ENCODE measurements at regions of chr4 and their contacts with region 1.

Region 1: GRCh38 chr4:45751877-45752530 is 371.9 kb downstream of the GABRG1 start:
- DNase-seq: no peak
- ATAC-seq: no peak
- H3K4me3 ChIP-seq: no peak overlapping the region
- H3K27ac ChIP-seq: no peak overlapping the region
- H3K4me1 ChIP-seq: peaks cover 0 to 3% (median 0%) of the 10 kb centered on the region in 9 donors
- H3K27me3 ChIP-seq: no peaks in the 10 kb centered on the region
- CTCF ChIP-seq: no peak

Region 2: GRCh38 chr4:45550766-45551366 is 201.1 kb before region 1 on chr4:
- intact Hi-C with region 1: loop called in 1 of 10 experiments (anchors 10 kb)
- DNase-seq: no peak
- ATAC-seq: no peak
- H3K4me3 ChIP-seq: no peak overlapping the region
- H3K27ac ChIP-seq: no peak overlapping the region
- H3K4me1 ChIP-seq: peaks cover 0 to 7% (median 0%) of the 10 kb centered on the region in 9 donors
- H3K27me3 ChIP-seq: no peaks in the 10 kb centered on the region
- CTCF ChIP-seq: peak in 4 of 9 donors; percentile 3 to 42 (median 18)

Region 3: DNA sequence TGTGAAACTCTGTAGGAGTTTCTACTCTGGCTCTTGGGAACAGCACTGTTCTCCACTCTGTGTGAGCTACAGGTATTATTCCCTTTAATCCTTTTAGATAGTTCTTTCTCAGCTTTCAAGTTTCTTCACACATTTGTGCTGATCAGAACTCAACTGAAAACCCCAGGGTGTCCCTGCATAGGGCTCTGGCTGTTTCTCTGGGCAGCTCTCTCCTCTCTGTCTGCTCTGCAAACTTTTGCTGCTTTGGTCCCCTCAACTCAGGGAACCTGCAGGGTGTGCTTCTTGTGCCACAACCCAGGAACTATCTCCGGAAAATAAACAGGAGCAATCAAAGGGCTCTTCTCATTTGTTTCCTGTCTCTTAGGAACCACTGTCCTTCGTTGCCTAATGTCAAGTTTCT is 834.6 kb after region 1 on chr4:
- intact Hi-C with region 1: no loop called
- DNase-seq: no peak
- ATAC-seq: no peak
- H3K4me3 ChIP-seq: no peak overlapping the region
- H3K27ac ChIP-seq: no peak overlapping the region
- H3K4me1 ChIP-seq: no peaks in the 10 kb centered on the region
- H3K27me3 ChIP-seq: no peaks in the 10 kb centered on the region
- CTCF ChIP-seq: no peak